MCF 10A (cell line): ENCODE measurements at regions of chr16 and their contacts with region 1.

Region 1: DNA sequence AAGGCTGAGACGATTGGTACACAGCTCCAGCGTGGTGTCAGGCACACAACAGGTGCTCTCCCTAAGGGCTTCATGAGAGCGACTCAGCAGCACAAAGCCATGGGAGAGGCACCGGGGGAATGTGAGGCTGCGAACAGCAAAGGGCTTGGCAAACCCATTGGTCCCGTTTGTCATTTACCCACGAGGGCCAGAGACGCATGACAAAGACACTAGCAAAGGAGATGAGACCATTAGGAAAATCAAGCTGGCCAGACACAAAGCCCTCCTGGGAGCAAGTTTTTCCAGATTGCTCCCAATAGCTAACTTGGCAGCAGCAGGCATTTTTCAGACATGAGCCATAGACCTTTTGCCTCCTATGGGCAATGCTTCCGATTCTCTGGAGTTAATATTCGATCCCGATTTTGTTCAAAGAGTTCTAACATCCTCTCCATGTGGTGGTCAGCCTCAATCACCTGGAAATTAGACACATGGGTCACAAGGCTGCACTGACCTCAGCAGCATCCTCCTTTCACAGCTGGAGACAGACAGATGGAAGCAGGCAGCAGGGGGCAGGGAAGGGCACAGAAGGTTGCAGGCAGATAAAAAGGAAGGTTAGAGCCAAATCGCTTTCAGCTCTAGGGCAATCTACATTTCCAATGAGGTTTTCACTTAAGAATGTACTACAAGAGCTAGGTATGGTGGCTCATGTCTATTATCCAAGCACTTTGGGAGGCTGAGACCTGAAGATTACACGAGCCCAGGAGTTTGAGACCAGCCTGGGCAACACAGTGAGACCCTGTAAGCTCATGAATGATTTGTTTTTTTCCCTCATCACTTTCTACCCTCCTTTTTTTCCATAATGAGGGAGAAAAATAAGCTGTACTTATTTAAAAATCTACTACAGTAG is 38.1 kb downstream of the TK2 start:
- DNase-seq: peak; percentile 79
- H3K4me3 Mint-ChIP-seq: peak overlapping the region; percentile 40
- H3K27ac Mint-ChIP-seq: peak overlapping the region; percentile 85
- H3K4me1 Mint-ChIP-seq: peaks cover 62% of the 10 kb centered on the region
- H3K27me3 Mint-ChIP-seq: no peaks in the 10 kb centered on the region
- CTCF ChIP-seq: peak; percentile 20

Region 2: GRCh38 chr16:66231452-66232160 is 280.3 kb before region 1 on chr16:
- CTCF ChIA-PET with region 1: no interaction called
- POLR2A ChIA-PET with region 1: no interaction called
- intact Hi-C with region 1: no loop called
- DNase-seq: no peak
- H3K4me3 Mint-ChIP-seq: no peak overlapping the region
- H3K27ac Mint-ChIP-seq: no peak overlapping the region
- H3K4me1 Mint-ChIP-seq: no peaks in the 10 kb centered on the region
- H3K27me3 Mint-ChIP-seq: no peaks in the 10 kb centered on the region
- CTCF ChIP-seq: no peak

Region 3: GRCh38 chr16:66521951-66522771 is 10.3 kb after region 1 on chr16:
- CTCF ChIA-PET with region 1: interaction called, 13 read pairs
- POLR2A ChIA-PET with region 1: interaction called, 12 read pairs
- intact Hi-C with region 1: no loop called
- DNase-seq: peak; percentile 86
- H3K4me3 Mint-ChIP-seq: no peak overlapping the region
- H3K27ac Mint-ChIP-seq: peak overlapping the region; percentile 71
- H3K4me1 Mint-ChIP-seq: peaks cover 26% of the 10 kb centered on the region
- H3K27me3 Mint-ChIP-seq: no peaks in the 10 kb centered on the region
- CTCF ChIP-seq: no peak

Region 4: GRCh38 chr16:66552286-66553177 is 40.7 kb after region 1 on chr16 and contains the start of gene CKLF:
- CTCF ChIA-PET with region 1: interaction called, 8 read pairs
- POLR2A ChIA-PET with region 1: interaction called, 97 read pairs
- intact Hi-C with region 1: loop called (anchors 2 kb)
- DNase-seq: peak; percentile 88
- H3K4me3 Mint-ChIP-seq: peak within 1 kb of the TSS; percentile 89
- H3K27ac Mint-ChIP-seq: peak within 1 kb of the TSS; percentile 86
- H3K4me1 Mint-ChIP-seq: peaks cover 52% of the 10 kb centered on the region
- H3K27me3 Mint-ChIP-seq: no peaks in the 10 kb centered on the region
- CTCF ChIP-seq: no peak
- total RNA-seq, gene CKLF: 41.3 and 57.8 TPM in 2 replicates

Region 5: GRCh38 chr16:66717112-66717675 is 205.3 kb after region 1 on chr16:
- CTCF ChIA-PET with region 1: no interaction called
- POLR2A ChIA-PET with region 1: no interaction called
- intact Hi-C with region 1: no loop called
- DNase-seq: peak; percentile 26
- H3K4me3 Mint-ChIP-seq: no peak overlapping the region
- H3K27ac Mint-ChIP-seq: no peak overlapping the region
- H3K4me1 Mint-ChIP-seq: peaks cover 10% of the 10 kb centered on the region
- H3K27me3 Mint-ChIP-seq: no peaks in the 10 kb centered on the region
- CTCF ChIP-seq: no peak